SK-N-SH (cell line): ENCODE measurements at regions of chr1 and their contacts with region 1.

Region 1: DNA sequence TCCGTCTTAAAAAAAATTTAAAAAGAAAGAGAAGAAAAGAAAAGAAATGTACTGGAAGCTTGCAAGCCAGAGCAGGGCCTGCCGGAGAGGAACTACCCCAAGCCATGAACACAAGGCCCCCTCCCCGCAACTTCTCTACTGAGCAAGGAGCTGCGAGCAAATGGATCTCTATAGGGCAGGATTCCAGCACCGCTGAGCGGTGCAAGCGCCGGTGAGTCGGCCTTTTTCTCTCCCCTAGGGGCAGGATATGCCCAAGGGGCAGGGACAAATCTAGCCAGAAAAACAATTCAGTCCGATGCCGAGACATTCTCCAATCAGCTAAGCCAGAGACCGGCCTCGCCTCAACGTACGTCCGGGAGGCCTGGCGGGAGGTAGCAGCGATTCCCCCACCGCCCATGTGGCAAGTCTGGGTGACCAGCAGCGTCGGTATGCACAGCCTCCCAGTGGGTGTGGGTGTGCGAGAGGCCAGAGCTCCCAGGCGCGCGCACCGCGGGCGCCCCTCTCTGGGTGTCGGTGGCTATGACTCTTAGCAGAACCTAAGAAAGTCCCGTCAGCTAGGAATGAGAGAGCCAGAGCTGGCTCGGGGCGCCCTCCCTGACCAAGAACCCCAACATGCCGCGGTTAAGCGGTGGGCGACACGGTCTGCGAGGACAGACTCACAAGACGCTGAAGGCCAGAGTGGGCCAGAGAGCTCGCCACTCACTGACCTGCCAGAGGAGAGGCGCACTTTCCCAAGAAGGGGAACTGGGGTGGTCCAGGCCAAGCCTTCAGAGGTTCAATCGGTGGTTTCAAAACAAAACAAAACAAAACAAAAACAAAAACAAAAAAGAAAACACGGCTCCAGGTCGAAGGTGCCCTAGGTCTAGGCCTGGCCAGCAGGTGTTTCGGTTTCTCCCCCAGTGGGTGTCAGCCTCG is 1.9 kb downstream of the CSMD2 start:
- DNase-seq: peak; percentile 89
- H3K4me3 ChIP-seq: peak overlapping the region; percentile 24 to 53
- H3K27ac ChIP-seq: no peak overlapping the region
- H3K4me1 ChIP-seq: peaks cover 0 to 15% of the 10 kb centered on the region in 2 experiments; a peak in 1 of 4 replicates
- H3K27me3 ChIP-seq: no peaks in the 10 kb centered on the region
- CTCF ChIP-seq: peak; percentile 55
- EP300 ChIP-seq: no peak
- RAD21 ChIP-seq: peak; percentile 88

Region 2: GRCh38 chr1:33683913-33684312 is 479.2 kb before region 1 on chr1:
- CTCF ChIA-PET with region 1: interaction called, 34 read pairs
- POLR2A ChIA-PET with region 1: no interaction called
- DNase-seq: peak; percentile 87
- H3K4me3 ChIP-seq: no peak overlapping the region
- H3K27ac ChIP-seq: peak overlapping the region in 1 of 2 experiments; percentile 86; a peak in 2 of 4 replicates
- H3K4me1 ChIP-seq: peaks cover 0 to 20% of the 10 kb centered on the region in 2 experiments; a peak in 2 of 4 replicates
- H3K27me3 ChIP-seq: no peaks in the 10 kb centered on the region
- CTCF ChIP-seq: no peak
- EP300 ChIP-seq: peak in 1 of 2 experiments; percentile 86; a peak in 2 of 4 replicates
- RAD21 ChIP-seq: peak; percentile 81

Region 3: DNA sequence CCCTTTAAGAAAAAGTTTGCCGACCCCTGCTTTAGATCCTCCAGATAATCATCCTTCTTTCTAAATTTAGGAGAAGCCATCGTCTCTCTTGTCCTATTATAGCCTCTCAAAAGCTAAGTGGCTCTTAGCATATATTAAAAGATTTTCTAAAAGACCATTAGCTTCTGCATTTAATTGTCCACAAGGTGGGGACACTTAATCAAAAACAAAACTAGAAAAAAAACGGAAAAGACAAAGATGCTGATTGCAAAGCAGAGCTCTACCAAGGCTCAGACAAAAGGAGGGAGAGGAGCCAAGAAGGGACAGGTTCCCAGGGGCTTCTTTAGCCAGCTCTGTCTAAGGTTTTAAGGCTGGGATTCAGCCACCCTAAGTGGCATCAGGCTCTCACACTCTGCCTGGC is 427.5 kb before region 1 on chr1:
- CTCF ChIA-PET with region 1: interaction called, 111 read pairs
- POLR2A ChIA-PET with region 1: no interaction called
- DNase-seq: peak; percentile 54
- H3K4me3 ChIP-seq: no peak overlapping the region
- H3K27ac ChIP-seq: no peak overlapping the region
- H3K4me1 ChIP-seq: no peaks in the 10 kb centered on the region; a peak in 1 of 4 replicates
- H3K27me3 ChIP-seq: no peaks in the 10 kb centered on the region
- CTCF ChIP-seq: no peak
- EP300 ChIP-seq: no peak
- RAD21 ChIP-seq: peak; percentile 78

Region 4: GRCh38 chr1:34057347-34058130 is 105.6 kb before region 1 on chr1:
- CTCF ChIA-PET with region 1: interaction called, 18 read pairs
- POLR2A ChIA-PET with region 1: no interaction called
- DNase-seq: peak; percentile 73
- H3K4me3 ChIP-seq: no peak overlapping the region; a peak in 1 of 4 replicates
- H3K27ac ChIP-seq: peak overlapping the region in 1 of 2 experiments; percentile 58; a peak in 2 of 4 replicates
- H3K4me1 ChIP-seq: peaks cover 0 to 31% of the 10 kb centered on the region in 2 experiments; a peak in 1 of 4 replicates
- H3K27me3 ChIP-seq: no peaks in the 10 kb centered on the region
- CTCF ChIP-seq: no peak
- EP300 ChIP-seq: peak in 1 of 2 experiments; percentile 55; a peak in 1 of 4 replicates
- RAD21 ChIP-seq: no peak

Region 5: DNA sequence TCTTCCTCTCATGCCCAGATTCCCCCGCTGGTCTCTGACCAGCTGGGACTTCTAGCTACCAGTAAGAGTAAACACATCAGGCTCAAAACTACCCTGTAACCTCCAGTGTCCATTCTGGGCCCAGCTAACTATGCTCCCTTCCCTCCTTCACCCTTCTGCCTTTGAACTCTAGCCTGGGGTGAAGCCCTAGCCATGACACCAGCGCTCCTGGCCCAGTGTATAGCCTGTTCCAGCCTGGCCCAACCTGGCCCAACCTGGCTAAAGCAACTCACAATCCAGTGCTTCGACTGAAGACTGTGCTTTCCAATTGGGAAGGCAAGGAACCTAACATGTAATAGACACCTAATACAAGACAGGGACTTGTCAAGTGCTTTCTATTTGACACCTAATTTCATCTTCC is 25.7 kb before region 1 on chr1:
- CTCF ChIA-PET with region 1: interaction called, 32 read pairs
- POLR2A ChIA-PET with region 1: no interaction called
- DNase-seq: no peak
- H3K4me3 ChIP-seq: no peak overlapping the region
- H3K27ac ChIP-seq: no peak overlapping the region
- H3K4me1 ChIP-seq: no peaks in the 10 kb centered on the region
- H3K27me3 ChIP-seq: no peaks in the 10 kb centered on the region
- CTCF ChIP-seq: no peak
- EP300 ChIP-seq: no peak
- RAD21 ChIP-seq: no peak

Region 6: GRCh38 chr1:34176830-34177603 is 13.9 kb after region 1 on chr1 and contains the start of gene C1orf94:
- CTCF ChIA-PET with region 1: interaction called, 20 read pairs
- POLR2A ChIA-PET with region 1: no interaction called
- DNase-seq: no peak
- H3K4me3 ChIP-seq: no peak within 1 kb of the TSS
- H3K27ac ChIP-seq: no peak within 1 kb of the TSS
- H3K4me1 ChIP-seq: no peaks in the 10 kb centered on the region
- H3K27me3 ChIP-seq: no peaks in the 10 kb centered on the region
- CTCF ChIP-seq: no peak
- EP300 ChIP-seq: no peak
- RAD21 ChIP-seq: no peak
- polyA plus RNA-seq, gene C1orf94: not detected in 2 replicates